Mucosa of descending colon (tissue), 3 donors: ENCODE measurements at regions of chr17 and their contacts with region 1.

Region 1: DNA sequence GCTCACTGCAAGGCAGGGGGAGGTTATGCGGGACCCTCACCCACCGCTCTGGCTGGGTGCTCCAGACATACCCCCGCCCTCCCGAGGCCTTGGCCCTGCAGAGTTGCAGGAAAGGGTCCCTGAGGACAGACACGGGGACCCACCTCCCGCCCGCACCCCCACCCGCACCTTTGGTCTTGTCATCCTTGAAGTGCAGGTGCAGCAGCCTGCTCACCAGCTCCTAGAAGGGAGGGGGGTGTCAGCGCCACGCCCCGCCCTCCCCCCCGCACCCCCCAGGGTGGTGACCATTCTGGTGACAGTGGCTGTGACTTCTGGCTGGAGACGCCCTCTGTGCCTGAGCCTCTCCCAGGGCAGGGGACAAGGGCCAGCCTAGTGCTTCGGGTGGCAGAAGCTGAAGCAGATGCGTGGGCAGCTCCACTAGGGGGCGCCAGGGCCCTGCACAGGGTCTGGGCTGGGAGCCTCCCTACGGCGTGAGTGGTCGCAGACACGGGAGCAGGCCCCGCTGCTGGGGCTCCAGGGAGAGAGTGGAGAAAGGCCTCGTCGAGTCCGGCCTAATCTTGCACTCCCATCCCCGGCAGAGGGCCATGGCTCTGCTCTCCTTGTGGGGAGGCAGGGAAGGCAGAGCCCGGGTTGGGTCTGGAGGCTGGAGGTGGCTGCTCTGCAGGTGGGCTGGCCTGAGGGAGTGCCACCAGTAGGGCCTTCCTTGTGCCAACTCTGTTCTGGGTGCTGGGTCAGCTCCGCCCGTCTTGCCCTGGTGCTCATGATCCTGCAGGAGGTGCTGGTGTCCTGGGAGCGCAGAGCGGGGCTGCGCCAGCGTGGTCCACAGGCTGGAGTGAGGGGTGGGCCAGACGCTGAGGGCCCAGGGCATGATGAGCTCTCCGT is 2.7 kb downstream of the CENPX start:
- DNase-seq: peak; percentile 65 to 79 (median 78)
- ATAC-seq: peak; percentile 18
- H3K4me3 ChIP-seq: no peak overlapping the region
- H3K4me1 ChIP-seq: peaks cover 26% of the 10 kb centered on the region
- CTCF ChIP-seq: peak; percentile 69

Region 2: GRCh38 chr17:81959362-81960129 is 60.4 kb before region 1 on chr17:
- intact Hi-C with region 1: loop called in 1 of 2 experiments (anchors 5 kb)
- DNase-seq: peak; percentile 73 to 86 (median 83)
- ATAC-seq: peak; percentile 93
- H3K4me3 ChIP-seq: no peak overlapping the region
- H3K4me1 ChIP-seq: peaks cover 22% of the 10 kb centered on the region
- CTCF ChIP-seq: peak; percentile 93

Region 3: DNA sequence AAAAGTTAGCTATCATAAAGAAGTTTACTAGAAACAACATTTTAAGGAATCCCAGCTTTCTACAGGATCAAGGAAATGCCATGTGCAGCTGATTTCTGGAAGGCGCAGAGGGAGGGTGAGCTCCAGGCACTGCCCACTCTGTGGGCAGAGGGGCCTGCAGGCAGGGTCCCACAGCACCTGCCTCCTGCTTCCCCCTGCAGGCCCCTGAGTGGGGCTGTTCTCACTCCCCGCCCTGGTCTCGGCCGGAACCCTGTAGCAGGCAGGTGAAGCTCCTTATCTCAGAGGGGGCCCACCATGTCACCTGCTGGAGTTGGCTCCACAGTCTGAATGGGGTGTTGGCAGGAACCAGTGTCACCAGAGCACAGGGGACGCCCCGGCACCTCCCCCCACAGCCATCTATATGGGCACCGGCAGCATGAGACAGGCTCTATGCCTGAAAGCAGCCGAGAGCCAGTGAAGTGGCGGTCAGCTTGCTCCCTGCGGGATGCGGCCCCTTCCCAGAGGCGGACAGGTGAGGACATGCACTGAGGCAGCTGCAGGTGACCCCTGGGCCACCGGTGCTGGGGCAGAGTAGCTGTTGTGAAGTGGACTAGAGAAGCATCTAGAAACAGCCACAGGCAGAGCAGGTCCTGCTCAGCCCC is 125.7 kb after region 1 on chr17:
- intact Hi-C with region 1: no loop called
- DNase-seq: no peak
- ATAC-seq: no peak
- H3K4me3 ChIP-seq: no peak overlapping the region
- H3K4me1 ChIP-seq: no peaks in the 10 kb centered on the region
- CTCF ChIP-seq: no peak

Region 4: GRCh38 chr17:82320956-82321927 is 301.3 kb after region 1 on chr17:
- intact Hi-C with region 1: no loop called
- DNase-seq: peak in 1 of 3 donors; percentile 52
- ATAC-seq: peak; percentile 28
- H3K4me3 ChIP-seq: no peak overlapping the region
- H3K4me1 ChIP-seq: no peaks in the 10 kb centered on the region
- CTCF ChIP-seq: peak; percentile 79